ENCODE measurements at regions of chr15 and their contacts with region 1.

Region 1: GRCh38 chr15:90482124-90483011 is 47.4 kb upstream of the CRTC3 start:
- DNase-seq: peak; percentile 67
- H3K4me3 ChIP-seq: no peak overlapping the region
- H3K27ac ChIP-seq: no peak overlapping the region
- H3K4me1 ChIP-seq: peaks cover 3% of the 10 kb centered on the region
- H3K27me3 ChIP-seq: no peaks in the 10 kb centered on the region
- CTCF ChIP-seq: peak; percentile 80

Region 2: DNA sequence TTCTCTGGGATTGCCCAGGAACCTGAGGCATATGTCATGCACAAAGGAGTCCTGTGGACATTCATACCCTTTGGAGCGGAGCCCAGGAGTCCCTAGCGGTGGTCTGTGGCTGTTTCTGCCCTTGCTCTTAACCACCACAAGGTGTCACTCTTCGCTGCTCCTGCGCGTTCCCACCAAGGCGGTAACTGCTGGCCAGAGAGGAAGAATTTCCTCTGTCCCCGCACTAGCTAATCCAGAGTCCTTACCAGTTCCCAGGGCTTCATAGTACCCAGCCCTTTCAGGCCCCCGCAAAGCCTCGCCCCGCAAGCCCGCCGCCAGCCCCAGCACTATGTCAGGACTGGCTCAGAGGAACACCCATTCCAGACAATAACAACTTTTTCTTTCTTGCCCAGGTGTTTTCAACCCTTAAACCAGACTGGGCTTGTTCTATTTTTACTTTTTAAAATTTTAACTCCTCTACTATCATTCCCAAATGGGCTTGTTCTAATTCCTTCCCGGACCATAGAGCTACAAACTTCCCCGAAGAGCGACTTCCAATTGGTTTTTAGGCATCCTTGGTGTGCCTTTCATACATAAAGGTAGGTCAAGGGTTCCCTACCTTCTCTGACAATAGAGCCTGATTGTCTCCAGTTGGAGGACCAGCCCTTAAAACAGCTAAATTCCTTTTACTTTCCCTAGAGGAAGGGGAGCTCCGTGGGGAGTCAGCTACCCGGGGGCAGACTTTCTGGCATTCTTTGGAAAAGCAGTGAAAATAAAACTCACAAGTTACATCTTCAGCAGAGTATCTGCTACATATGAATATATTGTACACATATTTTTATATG is 162.1 kb before region 1 on chr15:
- CTCF ChIA-PET with region 1: interaction called, 11 read pairs
- POLR2A ChIA-PET with region 1: no interaction called
- intact Hi-C with region 1: loop called (anchors 1 kb)
- DNase-seq: peak; percentile 93
- H3K4me3 ChIP-seq: no peak overlapping the region
- H3K27ac ChIP-seq: no peak overlapping the region
- H3K4me1 ChIP-seq: peaks cover 7% of the 10 kb centered on the region
- H3K27me3 ChIP-seq: no peaks in the 10 kb centered on the region
- CTCF ChIP-seq: peak; percentile 99

Region 3: DNA sequence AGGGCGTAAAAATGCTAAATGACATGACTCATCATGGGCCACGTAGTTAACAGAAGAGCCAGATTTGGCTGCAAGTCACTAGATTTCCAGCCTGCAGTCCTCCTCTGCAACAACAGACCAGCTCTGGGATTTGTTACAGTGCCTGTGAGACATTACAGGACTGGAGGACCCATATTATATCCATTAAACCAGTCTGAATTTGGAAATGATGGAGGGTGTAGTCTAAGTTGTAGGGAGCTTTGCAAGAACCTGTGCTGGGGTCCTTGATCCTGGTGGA is 119.5 kb before region 1 on chr15:
- CTCF ChIA-PET with region 1: interaction called, 17 read pairs
- POLR2A ChIA-PET with region 1: no interaction called
- intact Hi-C with region 1: loop called (anchors 1 kb)
- DNase-seq: peak; percentile 62
- H3K4me3 ChIP-seq: no peak overlapping the region
- H3K27ac ChIP-seq: no peak overlapping the region
- H3K4me1 ChIP-seq: peaks cover 11% of the 10 kb centered on the region
- H3K27me3 ChIP-seq: no peaks in the 10 kb centered on the region
- CTCF ChIP-seq: no peak

Region 4: GRCh38 chr15:90459368-90459767 is 23.0 kb before region 1 on chr15:
- CTCF ChIA-PET with region 1: interaction called, 12 read pairs
- POLR2A ChIA-PET with region 1: no interaction called
- intact Hi-C with region 1: no loop called
- DNase-seq: no peak
- H3K4me3 ChIP-seq: no peak overlapping the region
- H3K27ac ChIP-seq: no peak overlapping the region
- H3K4me1 ChIP-seq: no peaks in the 10 kb centered on the region
- H3K27me3 ChIP-seq: no peaks in the 10 kb centered on the region
- CTCF ChIP-seq: no peak

Region 5: GRCh38 chr15:90924375-90924774 is 442.0 kb after region 1 on chr15:
- CTCF ChIA-PET with region 1: no interaction called
- POLR2A ChIA-PET with region 1: no interaction called
- intact Hi-C with region 1: no loop called
- DNase-seq: no peak
- H3K4me3 ChIP-seq: no peak overlapping the region
- H3K27ac ChIP-seq: no peak overlapping the region
- H3K4me1 ChIP-seq: peaks cover 3% of the 10 kb centered on the region
- H3K27me3 ChIP-seq: no peaks in the 10 kb centered on the region
- CTCF ChIP-seq: no peak